ENCODE measurements at regions of chr14 and their contacts with region 1.

Region 1: DNA sequence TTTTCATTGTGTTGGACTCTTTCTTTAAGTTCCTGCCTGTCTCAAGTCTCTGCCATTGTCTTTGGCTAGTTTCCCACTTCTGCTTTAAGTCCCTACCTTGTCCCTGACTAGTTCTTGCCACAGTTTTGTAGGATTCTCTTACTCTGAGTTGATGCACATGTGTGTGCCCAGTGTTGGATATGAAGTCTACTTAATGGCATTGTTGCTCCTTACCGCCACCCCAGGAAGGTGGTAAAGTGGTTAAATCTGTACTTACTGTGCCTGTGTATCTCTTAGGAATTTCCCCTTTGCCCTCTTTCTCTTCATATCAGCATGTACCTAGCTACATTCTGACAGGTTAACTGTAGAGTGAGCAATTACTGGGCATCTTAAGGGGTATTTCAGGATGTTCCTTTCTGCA is 227.1 kb downstream of the NUBPL start:
- DNase-seq: no peak
- ATAC-seq: no peak

Region 2: GRCh38 chr14:31806263-31806662 is 17.9 kb after region 1 on chr14:
- intact Hi-C with region 1: loop called (anchors 1 kb)
- DNase-seq: no peak
- ATAC-seq: no peak

Region 3: GRCh38 chr14:31913370-31913769 is 125.0 kb after region 1 on chr14:
- intact Hi-C with region 1: no loop called
- DNase-seq: no peak
- ATAC-seq: no peak

Region 4: DNA sequence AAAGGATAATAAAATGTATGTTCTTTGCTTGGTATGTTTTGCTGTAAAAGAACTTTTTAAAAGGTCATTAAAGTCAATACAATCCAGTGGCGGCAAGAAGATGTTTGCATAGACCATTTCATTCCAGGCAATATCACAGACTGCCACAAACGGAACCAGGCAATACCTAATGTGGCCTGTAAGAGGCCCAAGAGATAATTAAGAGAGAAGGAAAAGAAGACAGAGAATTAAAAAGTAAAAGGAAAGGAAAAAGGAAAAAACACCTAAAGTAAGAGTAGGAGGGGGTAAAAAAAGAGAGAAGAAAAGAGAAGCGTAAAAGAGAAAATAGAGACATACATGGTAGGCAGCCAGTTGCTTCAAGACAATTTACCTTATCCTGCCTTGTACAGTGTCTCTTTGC is 281.9 kb after region 1 on chr14:
- intact Hi-C with region 1: no loop called
- DNase-seq: no peak
- ATAC-seq: no peak